K562 (cell line): ENCODE measurements at regions of chrX and their contacts with region 1.

Region 1: GRCh38 chrX:24498975-24499374 is 33.9 kb downstream of the PDK3 start:
- DNase-seq: peak in 1 of 4 experiments; percentile 10
- ATAC-seq: no peak; the same call in 2 of the 3 replicates
- H3K4me3 ChIP-seq: no peak overlapping the region
- H3K27ac ChIP-seq: no peak overlapping the region
- H3K4me1 ChIP-seq: no peaks in the 10 kb centered on the region
- H3K27me3 ChIP-seq: peaks cover 0 to 2% of the 10 kb centered on the region in 2 experiments; a peak in 3 of 5 replicates
- CTCF ChIP-seq: peak in 2 of 3 experiments; percentile 13 to 48; a peak in 3 of 6 replicates
- EP300 ChIP-seq: no peak
- POLR2A ChIP-seq: no peak
- RAD21 ChIP-seq: peak in 1 of 2 experiments; percentile 55; a peak in 2 of 4 replicates

Region 2: GRCh38 chrX:24259544-24260240 is 239.3 kb before region 1 on chrX:
- CTCF ChIA-PET with region 1: no interaction called
- POLR2A ChIA-PET with region 1: no interaction called
- in situ Hi-C with region 1: no loop called
- intact Hi-C with region 1: loop called (anchors 5 kb)
- DNase-seq: peak; percentile 12 to 68 (median 26)
- ATAC-seq: peak; percentile 83
- H3K4me3 ChIP-seq: no peak overlapping the region
- H3K27ac ChIP-seq: no peak overlapping the region
- H3K4me1 ChIP-seq: no peaks in the 10 kb centered on the region
- H3K27me3 ChIP-seq: peaks cover 0 to 14% of the 10 kb centered on the region in 2 experiments; a peak in 3 of 5 replicates
- CTCF ChIP-seq: peak; percentile 58 to 74 (median 59)
- EP300 ChIP-seq: no peak
- POLR2A ChIP-seq: no peak
- RAD21 ChIP-seq: peak; percentile 43 to 66

Region 3: DNA sequence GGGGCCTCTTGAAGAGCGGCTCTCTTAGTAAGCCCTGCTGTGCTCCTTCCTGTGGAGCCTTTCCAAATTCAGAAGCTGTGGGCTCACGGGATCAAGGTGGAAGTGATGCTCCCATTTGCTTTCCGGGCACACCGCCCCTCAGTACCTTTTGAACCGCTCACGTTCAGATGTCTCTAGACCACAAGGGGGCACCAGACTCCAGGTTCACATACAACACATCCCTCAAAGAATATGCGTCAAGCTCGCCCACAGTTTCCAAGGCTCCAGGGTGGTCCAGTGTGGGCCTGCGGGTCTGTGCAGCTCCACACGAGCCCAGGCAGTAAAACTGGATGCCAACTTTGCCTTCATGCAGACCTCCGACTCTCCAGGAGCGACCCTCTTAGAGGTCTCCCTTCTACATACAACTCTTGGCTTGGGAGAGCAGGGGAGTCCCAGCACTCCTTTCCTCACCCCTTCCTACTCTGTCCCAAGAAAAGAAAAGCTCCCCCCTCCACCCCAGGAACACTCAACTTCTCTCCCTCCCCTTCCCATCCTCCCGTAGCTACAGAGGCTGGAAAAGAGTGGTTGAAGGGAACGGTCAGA is 127.5 kb before region 1 on chrX:
- CTCF ChIA-PET with region 1: interaction called, 3 read pairs
- POLR2A ChIA-PET with region 1: no interaction called
- in situ Hi-C with region 1: no loop called
- intact Hi-C with region 1: loop called (anchors 2 kb)
- DNase-seq: peak; percentile 34 to 64 (median 42)
- ATAC-seq: peak; percentile 90
- H3K4me3 ChIP-seq: no peak overlapping the region
- H3K27ac ChIP-seq: no peak overlapping the region
- H3K4me1 ChIP-seq: no peaks in the 10 kb centered on the region
- H3K27me3 ChIP-seq: peaks cover 0 to 9% of the 10 kb centered on the region in 2 experiments; a peak in 3 of 5 replicates
- CTCF ChIP-seq: peak; percentile 59 to 68 (median 64)
- EP300 ChIP-seq: no peak
- POLR2A ChIP-seq: no peak
- RAD21 ChIP-seq: peak; percentile 20 to 60; a peak in 2 of 4 replicates

Region 4: DNA sequence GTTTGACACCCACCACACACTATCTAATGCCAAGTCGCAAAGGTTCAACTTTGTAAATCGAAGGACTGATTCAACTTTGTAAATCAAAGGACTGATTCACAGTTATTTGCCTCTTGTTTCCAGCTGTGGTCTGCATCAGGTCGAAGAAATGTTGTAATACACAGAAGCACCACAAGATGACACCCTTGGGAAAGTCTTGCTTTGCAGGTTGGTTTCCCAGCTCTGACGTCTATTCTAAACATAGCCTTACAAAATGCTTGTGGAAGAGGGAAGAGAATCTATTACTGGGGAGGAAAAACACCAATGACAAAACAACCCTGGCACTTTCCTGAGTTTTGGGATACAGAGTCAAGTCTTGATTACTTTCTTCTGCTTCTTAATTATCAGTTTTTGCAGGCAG is 103.2 kb before region 1 on chrX:
- CTCF ChIA-PET with region 1: interaction called, 5 read pairs
- POLR2A ChIA-PET with region 1: no interaction called
- in situ Hi-C with region 1: no loop called
- intact Hi-C with region 1: loop called (anchors 2 kb)
- DNase-seq: peak; percentile 40 to 54 (median 50)
- ATAC-seq: peak; percentile 81
- H3K4me3 ChIP-seq: no peak overlapping the region
- H3K27ac ChIP-seq: no peak overlapping the region
- H3K4me1 ChIP-seq: no peaks in the 10 kb centered on the region
- H3K27me3 ChIP-seq: peaks cover 0 to 16% of the 10 kb centered on the region in 2 experiments; a peak in 3 of 5 replicates
- CTCF ChIP-seq: peak; percentile 67 to 85 (median 67)
- EP300 ChIP-seq: no peak
- POLR2A ChIP-seq: no peak
- RAD21 ChIP-seq: peak; percentile 82 to 89